Uterus (tissue), 4 donors: ENCODE measurements at regions of chr3 and their contacts with region 1.

Region 1: DNA sequence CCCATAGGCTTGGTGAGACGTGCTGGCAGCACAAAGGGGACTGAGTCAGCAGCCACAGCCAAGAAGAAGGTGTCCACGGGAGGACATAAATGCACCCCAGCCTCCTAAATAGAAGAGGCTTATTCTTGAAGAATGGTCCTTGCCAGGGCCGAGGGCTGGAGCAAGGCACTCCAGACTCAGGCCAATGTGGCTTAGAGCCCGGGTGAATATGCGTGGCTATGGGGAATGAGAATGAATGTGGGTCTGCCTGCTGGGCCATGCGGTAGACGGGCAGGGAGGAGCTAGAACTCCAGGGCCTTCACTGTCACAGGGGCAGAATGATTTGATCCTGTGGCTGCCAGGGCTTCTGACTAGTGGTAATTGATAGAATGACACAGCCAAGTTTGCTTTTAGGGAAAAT is 34.0 kb downstream of the DHX30 start:
- DNase-seq: no peak
- H3K4me3 ChIP-seq: no peak overlapping the region
- H3K27ac ChIP-seq: no peak overlapping the region
- H3K4me1 ChIP-seq: no peaks in the 10 kb centered on the region
- H3K27me3 ChIP-seq: no peaks in the 10 kb centered on the region
- CTCF ChIP-seq: no peak
- POLR2A ChIP-seq: no peak

Region 2: GRCh38 chr3:47989981-47990440 is 153.0 kb after region 1 on chr3:
- intact Hi-C with region 1: loop called (anchors 5 kb)
- DNase-seq: peak; percentile 75 to 89
- H3K4me3 ChIP-seq: no peak overlapping the region
- H3K27ac ChIP-seq: peak overlapping the region; percentile 8 to 66
- H3K4me1 ChIP-seq: no peaks in the 10 kb centered on the region
- H3K27me3 ChIP-seq: no peaks in the 10 kb centered on the region
- CTCF ChIP-seq: peak; percentile 90 to 97 (median 90)
- POLR2A ChIP-seq: no peak

Region 3: GRCh38 chr3:48151058-48151806 is 314.2 kb after region 1 on chr3:
- intact Hi-C with region 1: loop called (anchors 10 kb)
- DNase-seq: peak; percentile 54 to 69
- H3K4me3 ChIP-seq: no peak overlapping the region
- H3K27ac ChIP-seq: peak overlapping the region; percentile 17 to 51
- H3K4me1 ChIP-seq: no peaks in the 10 kb centered on the region
- H3K27me3 ChIP-seq: no peaks in the 10 kb centered on the region
- CTCF ChIP-seq: peak; percentile 52 to 84 (median 68)
- POLR2A ChIP-seq: no peak